ENCODE measurements at regions of chr5 and their contacts with region 1.

Region 1: DNA sequence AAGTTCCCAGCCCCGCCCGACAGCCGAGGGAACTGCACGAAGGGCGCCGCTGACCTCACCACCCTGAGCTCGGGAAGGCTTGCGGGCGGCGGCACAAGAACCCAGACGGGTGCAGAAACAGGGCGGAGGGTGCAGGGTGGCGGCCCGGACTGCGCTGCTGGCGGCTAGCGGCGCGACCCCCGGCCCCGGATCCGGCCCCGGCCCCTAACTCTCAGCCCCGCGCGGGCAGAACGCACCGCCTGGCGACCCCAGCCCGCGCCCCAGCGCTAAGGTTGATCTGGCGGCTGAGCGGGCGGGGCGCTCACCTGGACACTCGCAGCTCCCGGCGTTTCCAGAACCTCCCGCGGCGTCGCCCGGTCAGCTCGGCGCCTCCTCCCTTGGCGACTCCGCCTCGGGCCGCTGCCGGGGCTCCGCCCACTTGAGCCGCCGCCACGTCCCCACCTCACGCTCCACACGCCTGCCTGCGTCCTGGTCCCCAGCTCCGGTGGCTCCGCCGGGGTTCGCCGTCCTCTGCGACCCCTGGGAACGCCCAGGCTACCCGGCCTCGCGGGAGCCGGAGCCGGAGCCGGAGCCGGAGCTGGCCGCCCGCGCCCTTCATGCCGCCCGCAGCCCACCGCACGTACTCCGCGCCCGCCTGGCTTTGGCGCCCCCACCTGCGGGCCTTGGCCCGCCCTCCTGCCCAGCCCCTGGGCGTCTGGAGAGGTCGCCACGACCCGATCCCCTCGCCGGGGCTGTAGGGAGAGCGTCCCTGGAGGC is at the start of gene P4HA2:
- DNase-seq: peak; percentile 64 to 78
- ATAC-seq: peak; percentile 81 to 91
- H3K4me3 ChIP-seq: peak within 1 kb of the TSS; percentile 67 to 80 (median 72)
- H3K27ac ChIP-seq: peak within 1 kb of the TSS; percentile 74 to 88 (median 84)
- H3K4me1 ChIP-seq: peaks cover 34 to 35% of the 10 kb centered on the region in 2 donors
- H3K27me3 ChIP-seq: no peaks in the 10 kb centered on the region
- CTCF ChIP-seq: peak in 3 of 5 experiments; percentile 18 to 26 (median 20)
- POLR2A ChIP-seq: peak; percentile 64 to 70
- total RNA-seq, gene P4HA2: 5.8 to 15.7 (median 10.3) TPM

Region 2: GRCh38 chr5:132190161-132190817 is 37.4 kb before region 1 on chr5:
- in situ Hi-C with region 1: no loop called
- intact Hi-C with region 1: loop called (anchors 5 kb)
- DNase-seq: no peak
- ATAC-seq: peak; percentile 100
- H3K4me3 ChIP-seq: no peak overlapping the region
- H3K27ac ChIP-seq: peak overlapping the region in 1 of 4 donors; percentile 20
- H3K4me1 ChIP-seq: no peaks in the 10 kb centered on the region
- H3K27me3 ChIP-seq: no peaks in the 10 kb centered on the region
- CTCF ChIP-seq: peak; percentile 56 to 83 (median 75)
- POLR2A ChIP-seq: no peak

Region 3: DNA sequence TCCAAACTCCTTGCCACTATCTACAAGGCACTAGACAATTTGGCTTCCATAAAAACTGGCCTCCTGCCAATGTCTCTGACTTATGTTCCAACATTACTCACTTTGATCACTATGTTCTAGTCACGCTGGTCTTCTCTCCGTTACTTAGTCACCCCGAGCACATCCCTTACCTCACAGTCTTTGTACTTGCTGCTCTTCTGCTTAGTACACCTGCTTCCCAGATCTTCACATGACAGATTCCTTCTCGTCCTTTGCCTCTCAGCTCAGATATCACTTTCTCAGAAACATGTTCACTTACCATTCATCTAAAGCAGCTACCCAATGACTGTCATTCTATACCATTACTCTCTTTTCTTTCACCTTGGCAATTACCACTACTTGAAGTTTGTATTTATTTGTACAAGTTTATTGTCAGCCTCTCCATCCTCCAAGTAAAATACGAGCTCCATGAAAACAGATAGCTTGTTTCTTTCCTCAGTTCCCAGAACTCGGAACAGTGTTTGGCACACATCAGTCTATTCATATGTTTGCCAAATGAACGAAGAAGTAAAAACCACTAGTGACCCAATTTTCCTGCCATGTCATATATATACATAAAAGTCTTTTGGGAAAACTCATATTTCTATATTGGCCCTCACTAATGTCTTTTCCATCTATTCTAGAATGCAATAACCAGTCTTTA is 135.9 kb after region 1 on chr5:
- in situ Hi-C with region 1: no loop called
- intact Hi-C with region 1: loop called (anchors 5 kb)
- DNase-seq: peak; percentile 90 to 92
- ATAC-seq: peak; percentile 93 to 95
- H3K4me3 ChIP-seq: peak overlapping the region in 3 of 4 donors; percentile 7 to 15 (median 14)
- H3K27ac ChIP-seq: peak overlapping the region; percentile 92 to 99 (median 96)
- H3K4me1 ChIP-seq: peaks cover 31 to 52% of the 10 kb centered on the region in 2 donors
- H3K27me3 ChIP-seq: no peaks in the 10 kb centered on the region
- CTCF ChIP-seq: no peak
- POLR2A ChIP-seq: no peak